CD8-positive, alpha-beta T cell (primary cell): ENCODE measurements at regions of chr19 and their contacts with region 1.

Region 1: GRCh38 chr19:18571564-18572300 is at the start of gene UBA52:
- DNase-seq: peak; percentile 98 to 100 (median 99)
- ATAC-seq: peak; percentile 91
- H3K4me3 ChIP-seq: peak within 1 kb of the TSS; percentile 94 to 97
- H3K4me3 Mint-ChIP-seq: peak within 1 kb of the TSS; percentile 95
- H3K27ac ChIP-seq: peak within 1 kb of the TSS; percentile 95 to 96
- H3K27ac Mint-ChIP-seq: peak within 1 kb of the TSS; percentile 97
- H3K4me1 ChIP-seq: peaks cover 16% of the 10 kb centered on the region
- H3K4me1 Mint-ChIP-seq: peaks cover 19% of the 10 kb centered on the region
- H3K27me3 ChIP-seq: no peaks in the 10 kb centered on the region
- H3K27me3 Mint-ChIP-seq: no peaks in the 10 kb centered on the region
- CTCF ChIP-seq: no peak
- total RNA-seq, gene UBA52: 2,140 to 2,193 TPM

Region 2: DNA sequence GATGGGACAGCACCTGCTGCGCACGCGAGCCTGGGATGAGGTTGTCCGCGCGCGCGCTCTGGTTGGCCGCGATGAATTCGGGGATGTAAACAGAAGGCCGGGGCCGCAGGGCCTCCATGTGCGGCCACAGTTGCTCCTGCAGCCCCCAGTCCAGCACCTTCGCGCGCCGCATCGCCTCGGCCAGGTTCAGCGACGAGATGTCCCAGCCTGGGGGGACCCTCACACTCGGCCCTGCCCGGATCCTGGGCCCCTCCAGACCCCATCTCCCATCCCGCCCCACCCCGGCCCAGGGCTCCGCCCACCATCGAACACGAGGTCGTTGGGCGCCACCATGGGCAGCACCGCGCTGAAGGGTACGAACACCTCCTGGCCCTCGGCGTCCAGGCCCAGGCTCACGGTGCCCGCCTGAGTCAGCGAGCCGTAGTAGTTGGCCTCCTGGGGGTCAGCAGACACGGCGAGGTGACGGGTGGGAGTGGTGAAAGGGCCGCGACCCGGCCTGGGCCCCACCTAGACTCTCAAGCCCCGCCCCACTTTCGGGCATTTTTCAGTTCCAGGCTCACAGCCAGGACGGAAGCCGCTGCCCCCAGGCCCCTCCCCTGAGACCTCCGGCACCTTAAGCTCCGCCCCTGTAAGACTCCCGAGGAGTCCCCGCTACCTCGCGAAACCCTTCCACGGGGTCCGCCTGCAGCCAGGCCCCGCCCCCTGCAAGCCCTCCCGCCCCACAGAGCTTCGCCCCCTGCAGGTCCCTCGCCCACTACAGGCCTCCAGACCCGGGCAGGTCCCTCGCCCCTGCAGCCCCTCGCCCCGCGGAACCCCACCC is 134.9 kb before region 1 on chr19:
- CTCF ChIA-PET with region 1: no interaction called
- POLR2A ChIA-PET with region 1: no interaction called
- intact Hi-C with region 1: loop called in 1 of 2 experiments (anchors 1 kb)
- DNase-seq: peak; percentile 65 to 94 (median 87)
- ATAC-seq: peak; percentile 74
- H3K4me3 ChIP-seq: peak overlapping the region; percentile 57 to 65
- H3K4me3 Mint-ChIP-seq: peak overlapping the region; percentile 81
- H3K27ac ChIP-seq: peak overlapping the region in 1 of 2 experiments; percentile 48
- H3K27ac Mint-ChIP-seq: peak overlapping the region; percentile 41
- H3K4me1 ChIP-seq: peaks cover 26% of the 10 kb centered on the region
- H3K4me1 Mint-ChIP-seq: peaks cover 24% of the 10 kb centered on the region
- H3K27me3 ChIP-seq: no peaks in the 10 kb centered on the region
- H3K27me3 Mint-ChIP-seq: no peaks in the 10 kb centered on the region
- CTCF ChIP-seq: no peak

Region 3: DNA sequence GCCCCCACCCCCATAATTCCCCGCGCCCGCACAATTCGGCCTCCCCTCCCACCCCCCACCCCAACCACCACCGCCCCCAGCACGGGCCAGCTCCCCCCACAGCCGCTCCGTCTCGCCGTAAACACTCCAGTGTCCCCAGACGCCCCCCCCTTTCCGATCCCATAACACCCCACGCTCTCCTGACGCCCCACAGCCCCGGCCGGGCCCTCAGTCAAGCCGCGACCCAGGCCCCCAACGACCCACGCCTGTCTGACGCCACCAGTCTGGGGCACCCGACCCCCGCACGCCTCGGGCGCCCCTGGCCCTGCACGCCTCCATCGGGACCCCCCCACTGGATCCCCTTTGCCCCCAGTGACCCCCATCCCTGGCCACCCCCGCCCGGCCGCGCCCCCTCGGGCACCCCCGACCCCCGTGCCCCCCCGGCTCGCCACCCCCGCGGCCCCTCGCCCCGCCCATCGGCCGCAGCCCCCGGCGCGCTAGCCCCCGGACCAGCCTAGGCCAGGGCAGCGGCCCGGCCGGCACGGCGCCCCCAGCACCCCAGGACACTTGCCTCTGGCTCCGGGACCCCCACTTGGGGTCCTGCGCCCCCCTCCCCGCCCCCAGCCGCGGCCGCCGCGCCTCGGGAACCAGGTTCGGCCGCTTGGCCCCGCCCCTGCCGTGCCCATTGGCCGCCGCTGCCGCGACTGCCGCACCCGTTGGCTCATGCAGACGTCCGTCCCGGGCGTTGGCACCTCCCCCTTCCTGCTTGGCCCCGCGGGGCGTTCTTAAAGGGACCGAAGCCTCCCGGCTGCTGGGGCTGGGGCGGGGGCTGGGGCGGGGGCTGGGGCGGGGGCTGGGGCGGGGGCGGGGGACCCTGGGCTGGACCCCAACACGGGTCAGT is 28.6 kb before region 1 on chr19 and contains the start of gene FKBP8:
- CTCF ChIA-PET with region 1: interaction called, 8 read pairs
- POLR2A ChIA-PET with region 1: interaction called, 18 read pairs
- intact Hi-C with region 1: loop called (anchors 1 kb)
- DNase-seq: peak; percentile 86 to 96 (median 94)
- ATAC-seq: peak; percentile 97
- H3K4me3 ChIP-seq: peak within 1 kb of the TSS; percentile 58 to 62
- H3K4me3 Mint-ChIP-seq: peak within 1 kb of the TSS; percentile 89
- H3K27ac ChIP-seq: peak within 1 kb of the TSS; percentile 64 to 86
- H3K27ac Mint-ChIP-seq: peak within 1 kb of the TSS; percentile 96
- H3K4me1 ChIP-seq: peaks cover 20% of the 10 kb centered on the region
- H3K4me1 Mint-ChIP-seq: peaks cover 26% of the 10 kb centered on the region
- H3K27me3 ChIP-seq: no peaks in the 10 kb centered on the region
- H3K27me3 Mint-ChIP-seq: no peaks in the 10 kb centered on the region
- CTCF ChIP-seq: no peak
- total RNA-seq, gene FKBP8: 155 to 158 TPM

Region 4: GRCh38 chr19:18594096-18594823 is 22.5 kb after region 1 on chr19:
- CTCF ChIA-PET with region 1: interaction called, 11 read pairs
- POLR2A ChIA-PET with region 1: interaction called, 56 read pairs
- intact Hi-C with region 1: loop called in 1 of 2 experiments (anchors 1 kb)
- DNase-seq: peak; percentile 47 to 87 (median 74)
- ATAC-seq: peak; percentile 79
- H3K4me3 ChIP-seq: peak overlapping the region; percentile 38 to 79
- H3K4me3 Mint-ChIP-seq: peak overlapping the region; percentile 76
- H3K27ac ChIP-seq: peak overlapping the region in 1 of 2 experiments; percentile 31
- H3K27ac Mint-ChIP-seq: peak overlapping the region; percentile 55
- H3K4me1 ChIP-seq: peaks cover 34% of the 10 kb centered on the region
- H3K4me1 Mint-ChIP-seq: peaks cover 28% of the 10 kb centered on the region
- H3K27me3 ChIP-seq: peaks cover 0 to 4% of the 10 kb centered on the region in 2 experiments
- H3K27me3 Mint-ChIP-seq: peaks cover 5% of the 10 kb centered on the region
- CTCF ChIP-seq: peak; percentile 78

Region 5: GRCh38 chr19:18710996-18711751 is 139.4 kb after region 1 on chr19:
- CTCF ChIA-PET with region 1: no interaction called
- POLR2A ChIA-PET with region 1: no interaction called
- intact Hi-C with region 1: no loop called
- DNase-seq: no peak
- ATAC-seq: no peak
- H3K4me3 ChIP-seq: no peak overlapping the region
- H3K4me3 Mint-ChIP-seq: no peak overlapping the region
- H3K27ac ChIP-seq: no peak overlapping the region
- H3K27ac Mint-ChIP-seq: no peak overlapping the region
- H3K4me1 ChIP-seq: peaks cover 35% of the 10 kb centered on the region
- H3K4me1 Mint-ChIP-seq: peaks cover 37% of the 10 kb centered on the region
- H3K27me3 ChIP-seq: no peaks in the 10 kb centered on the region
- H3K27me3 Mint-ChIP-seq: no peaks in the 10 kb centered on the region
- CTCF ChIP-seq: no peak

Region 6: GRCh38 chr19:19063183-19064097 is 491.7 kb after region 1 on chr19 and contains the start of gene SLC25A42:
- CTCF ChIA-PET with region 1: no interaction called
- POLR2A ChIA-PET with region 1: no interaction called
- intact Hi-C with region 1: loop called in 1 of 2 experiments (anchors 5 kb)
- DNase-seq: peak; percentile 97 to 100 (median 99)
- ATAC-seq: peak; percentile 90
- H3K4me3 ChIP-seq: peak within 1 kb of the TSS; percentile 61 to 87
- H3K4me3 Mint-ChIP-seq: peak within 1 kb of the TSS; percentile 89
- H3K27ac ChIP-seq: peak within 1 kb of the TSS; percentile 47 to 77
- H3K27ac Mint-ChIP-seq: peak within 1 kb of the TSS; percentile 88
- H3K4me1 ChIP-seq: peaks cover 23% of the 10 kb centered on the region
- H3K4me1 Mint-ChIP-seq: peaks cover 32% of the 10 kb centered on the region
- H3K27me3 ChIP-seq: no peaks in the 10 kb centered on the region
- H3K27me3 Mint-ChIP-seq: no peaks in the 10 kb centered on the region
- CTCF ChIP-seq: no peak
- total RNA-seq, gene SLC25A42: 8.3 to 10.6 TPM